Caco-2 (cell line): ENCODE measurements at regions of chr13 and their contacts with region 1.

Region 1: DNA sequence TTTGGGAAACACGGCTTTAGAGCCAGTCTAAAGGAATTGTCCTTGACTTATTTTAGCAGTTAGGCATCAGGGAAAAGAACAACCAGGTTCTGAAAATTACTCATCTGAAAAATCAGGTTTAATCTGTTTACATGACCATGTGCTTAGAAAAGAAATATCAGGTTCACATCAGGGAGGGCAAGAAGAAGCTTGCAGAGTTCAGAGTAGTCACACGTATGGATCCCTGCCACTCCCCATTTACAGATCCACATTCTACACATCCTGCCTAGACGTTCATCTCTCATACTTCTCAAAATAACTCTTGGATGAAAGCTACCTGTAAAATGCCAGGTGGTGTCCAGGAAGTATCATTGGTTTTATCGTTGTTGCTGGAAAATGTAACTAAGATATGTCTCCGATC is 14.0 kb upstream of the PHF11 start:
- DNase-seq: no peak
- H3K4me3 ChIP-seq: no peak overlapping the region
- H3K4me3 Mint-ChIP-seq: no peak overlapping the region
- H3K27ac Mint-ChIP-seq: no peak overlapping the region
- H3K4me1 ChIP-seq: no peaks in the 10 kb centered on the region
- H3K4me1 Mint-ChIP-seq: no peaks in the 10 kb centered on the region
- H3K27me3 ChIP-seq: no peaks in the 10 kb centered on the region
- H3K27me3 Mint-ChIP-seq: no peaks in the 10 kb centered on the region
- CTCF ChIP-seq: no peak

Region 2: GRCh38 chr13:49502954-49503353 is 21.2 kb after region 1 on chr13:
- CTCF ChIA-PET with region 1: interaction called, 13 read pairs
- POLR2A ChIA-PET with region 1: no interaction called
- intact Hi-C with region 1: no loop called
- DNase-seq: no peak
- H3K4me3 ChIP-seq: no peak overlapping the region
- H3K4me3 Mint-ChIP-seq: no peak overlapping the region
- H3K27ac Mint-ChIP-seq: no peak overlapping the region
- H3K4me1 ChIP-seq: no peaks in the 10 kb centered on the region
- H3K4me1 Mint-ChIP-seq: no peaks in the 10 kb centered on the region
- H3K27me3 ChIP-seq: no peaks in the 10 kb centered on the region; the same call in 1 of the 2 replicates
- H3K27me3 Mint-ChIP-seq: peaks cover 2% of the 10 kb centered on the region
- CTCF ChIP-seq: no peak

Region 3: DNA sequence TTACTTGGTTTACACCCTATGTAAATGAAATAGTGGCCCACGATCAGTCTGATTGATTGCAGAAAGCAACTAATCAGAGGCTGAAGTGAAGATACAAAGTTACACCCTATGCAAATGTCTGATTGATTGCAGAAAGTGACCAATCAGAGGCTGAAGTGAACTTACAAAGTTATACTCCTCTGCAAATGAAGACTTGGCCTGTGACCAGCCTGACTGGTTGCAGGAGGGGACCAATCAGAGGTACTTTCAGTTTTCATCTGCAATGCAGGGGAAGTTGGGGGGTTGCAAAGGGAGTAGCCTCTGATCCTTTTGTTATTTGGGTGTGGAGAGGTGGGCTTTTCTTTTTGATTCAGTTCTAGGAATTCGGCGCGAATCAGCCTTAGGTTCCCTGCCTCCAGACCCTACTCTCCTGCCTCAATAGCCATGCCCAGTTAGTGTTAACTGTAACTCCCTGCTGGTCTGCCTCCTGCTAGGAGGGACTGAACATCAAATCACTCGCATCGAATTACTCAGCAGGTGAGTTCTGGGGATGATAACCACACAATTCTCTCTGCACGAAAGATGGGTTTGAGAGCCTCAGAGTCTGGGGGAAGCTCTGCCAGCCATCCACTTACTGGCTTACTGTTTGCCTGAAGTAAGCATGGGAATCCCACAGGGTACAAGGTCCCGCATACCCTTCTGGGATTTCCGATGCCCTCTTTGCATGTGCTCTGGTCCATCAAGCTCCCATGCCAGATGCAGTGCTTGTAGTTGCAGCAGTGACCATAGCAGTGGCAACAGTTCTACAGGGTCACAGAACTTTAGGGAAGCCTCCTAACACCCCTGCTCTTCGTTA is 154.0 kb after region 1 on chr13:
- CTCF ChIA-PET with region 1: no interaction called
- POLR2A ChIA-PET with region 1: no interaction called
- intact Hi-C with region 1: no loop called
- DNase-seq: no peak
- H3K4me3 ChIP-seq: no peak overlapping the region
- H3K4me3 Mint-ChIP-seq: no peak overlapping the region
- H3K27ac Mint-ChIP-seq: no peak overlapping the region
- H3K4me1 ChIP-seq: no peaks in the 10 kb centered on the region
- H3K4me1 Mint-ChIP-seq: no peaks in the 10 kb centered on the region
- H3K27me3 ChIP-seq: no peaks in the 10 kb centered on the region
- H3K27me3 Mint-ChIP-seq: no peaks in the 10 kb centered on the region
- CTCF ChIP-seq: no peak

Region 4: GRCh38 chr13:50081679-50082425 is 600.1 kb after region 1 on chr13:
- CTCF ChIA-PET with region 1: no interaction called
- POLR2A ChIA-PET with region 1: no interaction called
- intact Hi-C with region 1: no loop called
- DNase-seq: peak; percentile 99
- H3K4me3 ChIP-seq: peak overlapping the region; percentile 47
- H3K4me3 Mint-ChIP-seq: peak overlapping the region; percentile 87
- H3K27ac Mint-ChIP-seq: peak overlapping the region; percentile 96
- H3K4me1 ChIP-seq: peaks cover 10% of the 10 kb centered on the region; the same call in 1 of the 2 replicates
- H3K4me1 Mint-ChIP-seq: no peaks in the 10 kb centered on the region
- H3K27me3 ChIP-seq: no peaks in the 10 kb centered on the region
- H3K27me3 Mint-ChIP-seq: no peaks in the 10 kb centered on the region
- CTCF ChIP-seq: peak; percentile 15 to 29